Activated CD8-positive, alpha-beta T cell treated with anti-CD3 and anti-CD28 coated beads for 36 hours (primary cell): ENCODE measurements at regions of chr9 and their contacts with region 1.

Region 1: GRCh38 chr9:18255158-18255629 is 218.8 kb upstream of the ADAMTSL1 start:
- DNase-seq: peak; percentile 82
- ATAC-seq: peak; percentile 81
- H3K4me3 Mint-ChIP-seq: no peak overlapping the region
- H3K27ac Mint-ChIP-seq: no peak overlapping the region
- H3K4me1 Mint-ChIP-seq: no peaks in the 10 kb centered on the region
- H3K27me3 Mint-ChIP-seq: peaks cover 7% of the 10 kb centered on the region
- CTCF ChIP-seq: peak; percentile 93

Region 2: DNA sequence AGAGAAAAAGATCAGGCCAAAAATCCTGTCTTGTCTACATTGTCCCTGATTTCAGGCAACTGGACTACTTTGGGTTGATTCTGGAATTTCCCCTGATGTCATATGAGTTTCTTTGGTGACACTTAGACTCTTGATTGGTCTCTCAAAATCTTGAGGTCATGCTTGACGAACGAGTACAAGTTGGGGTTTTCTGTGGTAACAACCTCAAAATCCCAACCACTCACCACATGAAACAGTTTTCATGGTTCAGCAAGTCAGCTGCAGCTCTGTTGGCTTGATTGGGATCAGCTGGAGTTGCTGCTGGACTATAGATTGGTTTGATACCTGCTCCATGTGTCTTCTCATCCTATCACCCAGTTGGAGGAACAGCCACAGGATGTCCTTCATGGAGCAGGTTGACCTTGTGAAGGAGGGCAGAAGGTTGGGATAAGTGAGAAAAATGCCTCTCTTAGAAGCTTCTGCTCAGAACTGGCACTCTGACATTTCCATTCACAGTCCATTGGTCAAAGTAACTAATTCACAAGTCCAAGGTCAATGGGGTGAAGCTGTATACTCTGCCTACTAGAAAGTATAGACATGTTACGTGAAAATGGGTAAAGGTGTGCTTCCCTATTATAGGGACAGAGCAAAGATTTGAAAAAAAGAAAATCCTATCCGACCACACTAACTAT is 391.8 kb before region 1 on chr9:
- CTCF ChIA-PET with region 1: no interaction called
- POLR2A ChIA-PET with region 1: no interaction called
- intact Hi-C with region 1: no loop called
- DNase-seq: no peak
- ATAC-seq: no peak
- H3K4me3 Mint-ChIP-seq: no peak overlapping the region
- H3K27ac Mint-ChIP-seq: no peak overlapping the region
- H3K4me1 Mint-ChIP-seq: no peaks in the 10 kb centered on the region
- H3K27me3 Mint-ChIP-seq: no peaks in the 10 kb centered on the region
- CTCF ChIP-seq: no peak

Region 3: DNA sequence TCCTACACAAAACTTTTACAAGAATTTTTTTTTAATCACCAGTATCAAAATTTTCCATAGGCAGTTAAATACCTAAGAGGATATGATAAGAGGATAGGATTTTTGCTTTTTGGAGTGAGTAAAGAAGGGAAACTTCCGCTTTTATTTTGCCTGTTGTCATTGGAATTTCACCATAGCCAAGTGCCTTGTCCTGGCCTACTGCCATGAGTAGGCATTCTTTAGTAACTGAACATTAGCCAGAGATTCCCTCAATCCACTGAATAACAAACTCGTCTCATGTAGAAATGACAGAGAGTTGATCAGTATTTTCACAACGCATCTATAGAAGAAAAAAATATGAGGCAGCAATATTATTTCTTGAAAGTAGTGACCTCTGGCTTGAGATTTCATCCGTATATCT is 70.8 kb before region 1 on chr9:
- CTCF ChIA-PET with region 1: no interaction called
- POLR2A ChIA-PET with region 1: no interaction called
- intact Hi-C with region 1: no loop called
- DNase-seq: no peak
- ATAC-seq: no peak
- H3K4me3 Mint-ChIP-seq: no peak overlapping the region
- H3K27ac Mint-ChIP-seq: no peak overlapping the region
- H3K4me1 Mint-ChIP-seq: no peaks in the 10 kb centered on the region
- H3K27me3 Mint-ChIP-seq: no peaks in the 10 kb centered on the region
- CTCF ChIP-seq: no peak

Region 4: GRCh38 chr9:18268381-18268780 is 13.2 kb after region 1 on chr9:
- CTCF ChIA-PET with region 1: interaction called, 44 read pairs
- POLR2A ChIA-PET with region 1: no interaction called
- intact Hi-C with region 1: no loop called
- DNase-seq: no peak
- ATAC-seq: no peak
- H3K4me3 Mint-ChIP-seq: no peak overlapping the region
- H3K27ac Mint-ChIP-seq: no peak overlapping the region
- H3K4me1 Mint-ChIP-seq: no peaks in the 10 kb centered on the region
- H3K27me3 Mint-ChIP-seq: peaks cover 4% of the 10 kb centered on the region
- CTCF ChIP-seq: no peak

Region 5: GRCh38 chr9:18319918-18320445 is 64.8 kb after region 1 on chr9:
- CTCF ChIA-PET with region 1: no interaction called
- POLR2A ChIA-PET with region 1: no interaction called
- intact Hi-C with region 1: no loop called
- DNase-seq: no peak
- ATAC-seq: no peak
- H3K4me3 Mint-ChIP-seq: no peak overlapping the region
- H3K27ac Mint-ChIP-seq: no peak overlapping the region
- H3K4me1 Mint-ChIP-seq: no peaks in the 10 kb centered on the region
- H3K27me3 Mint-ChIP-seq: no peaks in the 10 kb centered on the region
- CTCF ChIP-seq: no peak

Region 6: GRCh38 chr9:18410983-18411382 is 155.8 kb after region 1 on chr9:
- CTCF ChIA-PET with region 1: no interaction called
- POLR2A ChIA-PET with region 1: no interaction called
- intact Hi-C with region 1: no loop called
- DNase-seq: no peak
- ATAC-seq: no peak
- H3K4me3 Mint-ChIP-seq: no peak overlapping the region
- H3K27ac Mint-ChIP-seq: no peak overlapping the region
- H3K4me1 Mint-ChIP-seq: no peaks in the 10 kb centered on the region
- H3K27me3 Mint-ChIP-seq: peaks cover 3% of the 10 kb centered on the region
- CTCF ChIP-seq: no peak

Region 7: DNA sequence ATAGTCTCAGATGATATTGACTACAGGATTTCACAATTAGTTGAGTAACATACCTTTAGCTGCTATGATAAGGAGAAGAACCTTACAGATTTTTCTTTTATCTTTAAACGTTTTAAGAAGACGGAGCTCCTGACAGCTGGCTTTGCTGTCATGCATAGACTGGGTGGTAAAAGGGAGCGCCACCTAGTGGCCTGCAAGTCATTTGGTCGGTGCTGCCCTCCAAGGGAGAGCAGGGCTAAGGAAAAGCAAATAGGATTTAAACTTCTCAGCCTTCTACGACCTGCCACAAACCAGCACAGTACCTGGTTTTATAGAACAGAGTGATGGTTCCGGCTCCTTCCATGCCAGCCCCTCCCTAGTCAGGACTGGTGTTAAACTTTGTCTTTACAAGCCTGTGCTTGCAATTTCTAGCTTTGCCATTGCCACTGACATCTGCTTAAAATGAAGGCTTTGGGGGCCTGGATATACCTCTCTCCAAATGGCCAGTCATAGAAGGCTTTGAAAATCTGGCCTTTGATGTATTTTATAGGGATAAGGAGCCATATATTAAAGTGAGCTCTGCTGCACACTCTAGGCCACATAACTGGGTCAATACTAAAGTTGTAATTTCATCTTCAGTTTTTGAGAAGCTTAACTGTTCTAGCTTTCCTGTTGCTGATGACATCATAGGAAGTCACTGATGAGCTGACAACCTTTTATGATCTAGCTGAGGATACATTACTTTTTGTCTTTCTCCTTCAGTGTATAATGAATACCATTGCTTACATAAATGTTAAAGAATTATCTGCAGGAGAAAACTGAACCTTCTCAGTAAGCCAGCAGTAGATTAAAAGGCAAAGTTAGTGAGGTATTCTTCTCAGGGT is 187.7 kb after region 1 on chr9:
- CTCF ChIA-PET with region 1: interaction called, 44 read pairs
- POLR2A ChIA-PET with region 1: no interaction called
- intact Hi-C with region 1: loop called (anchors 5 kb)
- DNase-seq: peak; percentile 68
- ATAC-seq: peak; percentile 75
- H3K4me3 Mint-ChIP-seq: no peak overlapping the region
- H3K27ac Mint-ChIP-seq: no peak overlapping the region
- H3K4me1 Mint-ChIP-seq: no peaks in the 10 kb centered on the region
- H3K27me3 Mint-ChIP-seq: peaks cover 15% of the 10 kb centered on the region
- CTCF ChIP-seq: peak; percentile 69

Region 8: DNA sequence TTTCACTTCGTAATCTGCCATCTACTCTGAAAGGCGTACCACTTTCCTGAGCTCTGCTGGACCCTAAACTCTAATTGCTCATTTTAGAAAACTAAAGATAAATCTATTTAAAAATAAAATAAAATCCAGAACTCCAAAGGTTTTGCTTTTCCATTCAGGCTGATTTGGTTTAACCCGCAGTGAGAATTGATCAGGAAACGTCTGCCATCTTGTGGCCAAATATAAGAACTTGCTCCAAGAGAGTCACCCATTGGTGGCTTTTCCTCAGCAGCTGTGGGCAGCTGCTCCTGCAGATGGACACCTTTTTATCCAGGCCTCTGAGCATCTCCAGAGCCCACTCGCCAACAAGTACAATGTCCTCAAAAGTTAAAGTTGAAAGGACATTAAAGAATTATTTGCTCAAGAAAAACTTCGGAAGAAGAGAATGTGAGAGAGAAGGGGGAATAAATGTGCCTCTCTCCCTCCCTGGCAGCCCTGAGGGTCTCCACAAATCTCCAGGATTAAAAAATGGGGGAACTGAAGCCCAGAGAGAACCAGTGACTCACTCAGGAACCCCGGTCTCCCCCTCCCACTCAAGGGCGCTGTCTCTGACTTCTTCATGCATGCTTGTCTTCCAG is 773.7 kb after region 1 on chr9:
- CTCF ChIA-PET with region 1: interaction called, 43 read pairs
- POLR2A ChIA-PET with region 1: no interaction called
- intact Hi-C with region 1: loop called (anchors 5 kb)
- DNase-seq: peak; percentile 41
- ATAC-seq: peak; percentile 51
- H3K4me3 Mint-ChIP-seq: no peak overlapping the region
- H3K27ac Mint-ChIP-seq: no peak overlapping the region
- H3K4me1 Mint-ChIP-seq: peaks cover 7% of the 10 kb centered on the region
- H3K27me3 Mint-ChIP-seq: peaks cover 8% of the 10 kb centered on the region
- CTCF ChIP-seq: peak; percentile 92

Region 9: GRCh38 chr9:19456996-19457692 is 1202.0 kb after region 1 on chr9:
- CTCF ChIA-PET with region 1: no interaction called
- POLR2A ChIA-PET with region 1: no interaction called
- intact Hi-C with region 1: loop called (anchors 5 kb)
- DNase-seq: peak; percentile 67
- ATAC-seq: peak; percentile 94
- H3K4me3 Mint-ChIP-seq: peak overlapping the region; percentile 47
- H3K27ac Mint-ChIP-seq: no peak overlapping the region
- H3K4me1 Mint-ChIP-seq: peaks cover 8% of the 10 kb centered on the region
- H3K27me3 Mint-ChIP-seq: no peaks in the 10 kb centered on the region
- CTCF ChIP-seq: peak; percentile 97